Ascending aorta (tissue), 2 donors: ENCODE measurements at regions of chr2 and their contacts with region 1.

Region 1: DNA sequence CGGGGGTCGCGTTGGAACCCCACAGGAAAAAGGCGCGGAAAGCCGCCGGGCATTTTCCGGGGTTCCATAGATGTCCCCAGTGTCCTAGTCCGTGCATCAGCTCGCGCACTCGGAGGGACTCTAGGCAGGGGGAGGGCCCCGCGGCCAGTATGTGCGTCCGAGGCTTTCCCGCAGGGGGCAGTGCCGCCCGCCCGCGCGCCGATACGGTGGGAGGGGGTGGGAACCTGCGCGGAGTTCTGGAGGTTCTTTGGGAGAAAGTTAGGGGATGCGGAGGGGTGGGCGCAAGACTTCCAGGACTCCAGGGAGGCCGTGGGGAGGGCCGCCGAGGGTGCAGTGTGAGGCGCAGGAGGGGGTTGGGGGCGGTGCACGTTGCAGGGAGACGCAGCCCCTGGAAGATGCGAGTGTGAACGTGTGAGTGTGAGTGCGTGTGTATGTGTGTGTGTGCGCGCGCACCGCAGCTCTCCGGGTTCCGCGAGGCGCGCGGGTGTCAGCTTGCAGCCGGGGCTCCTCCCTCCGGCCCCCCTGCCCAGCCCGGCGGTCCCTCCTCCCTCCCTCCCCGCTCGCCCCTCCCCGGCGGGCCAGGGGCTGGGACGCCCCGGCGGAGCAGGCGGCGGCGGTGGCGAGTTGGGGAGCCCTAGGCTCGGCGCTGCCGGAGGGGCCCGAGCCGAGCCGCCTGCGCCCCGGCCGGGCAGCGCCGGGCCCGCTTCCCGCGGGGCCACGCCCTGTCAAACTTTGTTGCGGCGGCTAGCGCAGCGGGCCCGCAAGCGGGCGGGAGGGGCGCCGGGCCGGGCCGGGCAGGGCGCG is at the start of gene TCF7L1:
- DNase-seq: peak; percentile 57 to 91
- H3K4me3 ChIP-seq: peak within 1 kb of the TSS; percentile 94 to 98
- H3K27ac ChIP-seq: peak within 1 kb of the TSS; percentile 91 to 93
- H3K4me1 ChIP-seq: peaks cover 4 to 28% of the 10 kb centered on the region in 2 donors
- H3K27me3 ChIP-seq: no peaks in the 10 kb centered on the region
- CTCF ChIP-seq: peak; percentile 85 to 98 (median 94)
- total RNA-seq, gene TCF7L1: 10.3 TPM

Region 2: DNA sequence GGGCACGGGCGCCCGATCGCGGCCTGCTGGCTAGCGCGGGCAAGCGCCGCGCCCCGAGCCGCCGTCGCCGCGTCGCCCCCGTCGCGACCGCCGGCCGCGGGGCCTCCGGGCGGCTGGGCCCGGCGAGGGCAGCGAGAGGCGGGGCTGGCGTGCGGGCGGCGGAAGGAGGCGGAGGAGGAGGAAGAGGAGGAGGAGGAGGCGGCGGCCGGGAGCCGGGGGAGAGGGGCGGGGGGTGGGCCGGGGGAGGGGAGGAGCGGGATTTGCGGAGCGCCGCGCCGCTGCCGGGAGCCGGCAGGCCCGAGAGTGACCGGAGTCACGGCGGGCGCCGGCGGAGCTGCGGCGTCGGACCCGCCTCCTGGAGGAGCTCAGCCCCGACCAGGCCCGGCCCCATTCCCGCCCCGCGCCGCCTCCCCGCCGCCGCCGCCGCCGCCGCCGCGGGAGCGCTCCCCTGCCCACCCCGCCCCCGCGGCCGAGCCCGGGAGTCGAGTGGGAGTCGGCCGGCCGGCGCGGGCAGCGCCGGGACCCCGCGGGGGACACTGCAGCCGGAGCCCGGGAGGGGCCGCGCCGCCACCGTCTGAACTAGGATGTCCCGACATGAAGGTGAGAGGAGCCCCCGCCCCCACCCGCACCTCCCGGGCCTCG is 162.0 kb before region 1 on chr2 and contains the start of gene KCMF1:
- intact Hi-C with region 1: loop called (anchors 5 kb)
- DNase-seq: peak in 1 of 2 donors; percentile 77
- H3K4me3 ChIP-seq: peak within 1 kb of the TSS; percentile 90 to 99
- H3K27ac ChIP-seq: peak within 1 kb of the TSS; percentile 94 to 99
- H3K4me1 ChIP-seq: peaks cover 9 to 22% of the 10 kb centered on the region in 2 donors
- H3K27me3 ChIP-seq: no peaks in the 10 kb centered on the region
- CTCF ChIP-seq: no peak
- total RNA-seq, gene KCMF1: 14.4 TPM

Region 3: DNA sequence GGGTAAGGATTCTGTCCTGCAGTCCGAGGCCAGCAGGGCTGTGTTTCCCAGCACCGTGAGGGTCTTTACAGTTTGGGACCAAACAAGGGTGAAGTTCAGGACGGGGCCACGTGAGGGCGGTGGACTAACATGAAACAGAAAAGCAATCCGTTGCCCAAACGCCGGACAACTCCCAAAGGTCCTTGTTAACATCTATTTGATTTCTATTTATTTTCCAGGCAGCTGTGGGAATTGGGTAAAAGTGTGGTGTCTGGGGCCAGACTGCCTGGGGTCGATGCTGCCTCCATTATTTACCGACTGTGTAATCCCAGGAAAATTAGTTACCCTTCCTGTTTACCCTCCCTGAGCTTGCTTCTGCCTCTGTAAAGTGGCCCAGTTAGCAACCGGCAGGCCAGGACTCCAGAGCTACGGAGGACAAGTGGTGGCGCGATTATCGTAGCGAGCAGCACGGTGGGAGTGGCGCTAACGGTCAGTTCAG is 66.1 kb before region 1 on chr2:
- intact Hi-C with region 1: loop called (anchors 5 kb)
- DNase-seq: peak; percentile 21 to 85
- H3K4me3 ChIP-seq: peak overlapping the region; percentile 42 to 59
- H3K27ac ChIP-seq: no peak overlapping the region
- H3K4me1 ChIP-seq: peaks cover 0 to 4% of the 10 kb centered on the region in 2 donors
- H3K27me3 ChIP-seq: no peaks in the 10 kb centered on the region
- CTCF ChIP-seq: peak; percentile 56 to 88 (median 80)

Region 4: DNA sequence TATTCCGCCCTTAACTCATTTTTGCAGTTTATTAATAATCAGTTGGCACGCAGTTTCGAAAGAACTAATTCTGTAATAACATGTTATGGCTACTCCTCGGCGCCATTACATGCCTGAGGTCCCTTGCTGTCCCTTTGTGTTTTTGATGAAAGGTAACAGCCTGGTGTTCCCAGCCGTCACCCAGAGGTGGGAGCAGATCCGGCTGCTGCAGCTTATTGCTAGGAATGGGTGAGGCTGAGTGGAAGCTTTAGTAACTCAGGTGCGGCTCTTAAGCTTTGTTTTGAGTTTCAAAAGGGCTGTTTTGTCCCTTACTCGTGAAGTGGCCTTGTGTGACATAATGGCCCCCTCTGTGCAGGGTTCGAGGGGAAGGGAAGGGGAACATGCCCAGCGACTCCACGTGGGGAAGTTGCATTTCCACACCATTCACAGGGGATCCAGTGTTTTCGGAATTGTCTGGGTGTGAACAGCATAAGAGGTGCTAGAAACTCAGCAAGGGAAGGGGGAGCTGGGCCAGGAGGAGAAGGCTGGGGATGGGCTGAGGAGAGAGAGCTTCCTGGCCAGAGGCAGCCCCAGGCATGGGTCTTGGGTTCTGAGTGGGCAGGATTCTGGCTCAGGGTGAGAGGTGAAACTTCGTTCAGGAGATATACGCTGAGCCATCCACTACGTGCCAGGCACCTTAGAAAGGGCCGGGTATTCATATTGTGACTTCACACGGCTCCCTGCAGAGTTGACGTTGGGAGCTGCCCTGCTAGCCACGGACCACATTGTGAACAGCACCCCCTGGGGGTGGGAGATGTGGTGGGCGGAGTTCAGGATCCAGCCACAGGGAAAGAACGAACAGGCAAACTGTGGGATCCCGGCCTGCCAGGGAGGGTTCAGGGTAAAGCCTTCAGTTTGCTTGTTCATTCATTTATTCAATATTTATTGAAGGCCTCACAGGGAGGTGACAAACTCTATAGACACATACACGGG is 110.4 kb after region 1 on chr2:
- intact Hi-C with region 1: loop called (anchors 2 kb)
- DNase-seq: no peak
- H3K4me3 ChIP-seq: no peak overlapping the region
- H3K27ac ChIP-seq: no peak overlapping the region
- H3K4me1 ChIP-seq: peaks cover 4 to 38% of the 10 kb centered on the region in 2 donors
- H3K27me3 ChIP-seq: no peaks in the 10 kb centered on the region
- CTCF ChIP-seq: peak; percentile 10 to 47 (median 23)

Region 5: DNA sequence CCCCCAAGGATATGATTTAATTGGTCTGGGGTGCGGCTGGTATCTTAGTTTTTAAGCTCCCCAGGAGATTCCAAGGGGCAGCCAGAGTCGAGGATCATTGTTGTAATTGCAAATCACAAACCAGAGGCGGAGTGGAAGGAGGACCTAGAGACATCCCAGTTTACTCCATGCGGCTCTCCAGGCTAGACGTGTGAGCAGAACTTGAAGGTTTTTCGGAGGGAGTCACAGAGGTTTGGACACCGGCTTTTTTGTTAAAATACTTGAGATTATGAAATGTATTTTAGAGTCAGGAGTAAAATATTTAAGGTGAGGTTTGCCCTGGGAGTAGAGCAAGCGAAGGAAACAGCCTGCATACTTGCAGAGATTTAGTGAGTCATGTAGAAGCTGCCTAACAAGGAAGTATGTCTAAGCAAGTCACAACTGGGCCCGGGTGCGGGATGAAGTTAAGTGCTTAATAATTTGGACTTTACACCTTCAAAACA is 155.2 kb after region 1 on chr2:
- intact Hi-C with region 1: loop called (anchors 1 kb)
- DNase-seq: no peak
- H3K4me3 ChIP-seq: no peak overlapping the region
- H3K27ac ChIP-seq: no peak overlapping the region
- H3K4me1 ChIP-seq: peaks cover 0 to 2% of the 10 kb centered on the region in 2 donors
- H3K27me3 ChIP-seq: no peaks in the 10 kb centered on the region
- CTCF ChIP-seq: no peak

Region 6: GRCh38 chr2:85302121-85302520 is 169.1 kb after region 1 on chr2:
- intact Hi-C with region 1: loop called (anchors 1 kb)
- DNase-seq: no peak
- H3K4me3 ChIP-seq: no peak overlapping the region
- H3K27ac ChIP-seq: no peak overlapping the region
- H3K4me1 ChIP-seq: no peaks in the 10 kb centered on the region
- H3K27me3 ChIP-seq: no peaks in the 10 kb centered on the region
- CTCF ChIP-seq: no peak

Region 7: GRCh38 chr2:85538486-85539360 is 405.7 kb after region 1 on chr2 and contains the start of gene MAT2A:
- intact Hi-C with region 1: loop called (anchors 5 kb)
- DNase-seq: peak; percentile 70 to 97
- H3K4me3 ChIP-seq: peak within 1 kb of the TSS; percentile 82 to 89
- H3K27ac ChIP-seq: peak within 1 kb of the TSS; percentile 98 to 99
- H3K4me1 ChIP-seq: peaks cover 2 to 41% of the 10 kb centered on the region in 2 donors
- H3K27me3 ChIP-seq: no peaks in the 10 kb centered on the region
- CTCF ChIP-seq: peak; percentile 69 to 85 (median 74)
- total RNA-seq, gene MAT2A: 91.7 TPM